PC-9 (cell line): ENCODE measurements at regions of chr6 and their contacts with region 1.

Region 1: DNA sequence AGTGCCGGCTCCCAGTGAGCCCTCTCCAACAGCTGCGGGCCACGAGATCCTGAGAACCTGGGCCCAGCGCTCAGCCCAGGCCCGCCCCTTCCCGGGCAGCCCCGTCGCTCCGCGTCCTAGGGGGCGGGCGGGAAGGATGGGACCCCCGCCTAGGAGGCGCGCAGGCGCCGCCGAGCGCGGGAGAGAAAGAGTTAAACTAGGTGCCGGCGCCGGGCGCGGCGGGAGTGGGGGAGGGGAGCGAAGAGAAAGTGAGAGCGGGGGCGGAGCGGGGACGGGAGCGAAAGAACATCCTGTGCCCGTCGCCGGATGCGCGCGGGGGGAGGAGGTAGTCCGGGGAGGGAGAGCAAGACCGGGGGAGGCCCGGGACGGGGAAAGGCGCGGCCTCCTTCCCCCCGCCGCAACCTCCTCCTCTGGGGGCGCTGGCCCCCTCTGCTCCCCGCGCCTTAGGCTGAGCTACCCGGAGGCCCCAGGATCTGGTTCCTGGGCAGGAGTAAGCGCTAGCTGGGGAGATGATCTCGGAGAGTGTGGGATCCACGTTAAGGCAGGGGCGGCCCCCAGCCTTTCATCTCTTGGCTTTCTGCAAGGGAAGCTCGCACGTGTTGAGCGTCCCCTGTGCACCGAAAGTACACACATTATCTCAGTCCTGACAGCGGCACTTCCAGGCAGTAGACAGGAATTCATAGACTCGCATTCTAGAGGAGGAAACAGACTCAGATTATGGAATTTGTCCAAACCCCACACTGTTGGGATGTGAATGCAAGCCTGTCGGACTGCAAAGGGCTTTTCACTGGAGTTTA is 4.9 kb upstream of the ARMC12 start:
- DNase-seq: peak; percentile 50 to 81
- H3K4me3 ChIP-seq: peak overlapping the region; percentile 81
- H3K27ac ChIP-seq: no peak overlapping the region
- H3K4me1 ChIP-seq: peaks cover 21% of the 10 kb centered on the region
- H3K27me3 ChIP-seq: no peaks in the 10 kb centered on the region
- CTCF ChIP-seq: no peak

Region 2: GRCh38 chr6:35297601-35298481 is 434.1 kb before region 1 on chr6 and contains the start of gene DEF6:
- CTCF ChIA-PET with region 1: no interaction called
- POLR2A ChIA-PET with region 1: interaction called, 4 read pairs
- intact Hi-C with region 1: loop called (anchors 1 kb)
- DNase-seq: peak; percentile 87
- H3K4me3 ChIP-seq: peak within 1 kb of the TSS; percentile 66
- H3K27ac ChIP-seq: no peak within 1 kb of the TSS
- H3K4me1 ChIP-seq: peaks cover 23% of the 10 kb centered on the region
- H3K27me3 ChIP-seq: no peaks in the 10 kb centered on the region
- CTCF ChIP-seq: peak; percentile 85
- total RNA-seq, gene DEF6: 19.6 and 27.0 TPM in 2 replicates

Region 3: DNA sequence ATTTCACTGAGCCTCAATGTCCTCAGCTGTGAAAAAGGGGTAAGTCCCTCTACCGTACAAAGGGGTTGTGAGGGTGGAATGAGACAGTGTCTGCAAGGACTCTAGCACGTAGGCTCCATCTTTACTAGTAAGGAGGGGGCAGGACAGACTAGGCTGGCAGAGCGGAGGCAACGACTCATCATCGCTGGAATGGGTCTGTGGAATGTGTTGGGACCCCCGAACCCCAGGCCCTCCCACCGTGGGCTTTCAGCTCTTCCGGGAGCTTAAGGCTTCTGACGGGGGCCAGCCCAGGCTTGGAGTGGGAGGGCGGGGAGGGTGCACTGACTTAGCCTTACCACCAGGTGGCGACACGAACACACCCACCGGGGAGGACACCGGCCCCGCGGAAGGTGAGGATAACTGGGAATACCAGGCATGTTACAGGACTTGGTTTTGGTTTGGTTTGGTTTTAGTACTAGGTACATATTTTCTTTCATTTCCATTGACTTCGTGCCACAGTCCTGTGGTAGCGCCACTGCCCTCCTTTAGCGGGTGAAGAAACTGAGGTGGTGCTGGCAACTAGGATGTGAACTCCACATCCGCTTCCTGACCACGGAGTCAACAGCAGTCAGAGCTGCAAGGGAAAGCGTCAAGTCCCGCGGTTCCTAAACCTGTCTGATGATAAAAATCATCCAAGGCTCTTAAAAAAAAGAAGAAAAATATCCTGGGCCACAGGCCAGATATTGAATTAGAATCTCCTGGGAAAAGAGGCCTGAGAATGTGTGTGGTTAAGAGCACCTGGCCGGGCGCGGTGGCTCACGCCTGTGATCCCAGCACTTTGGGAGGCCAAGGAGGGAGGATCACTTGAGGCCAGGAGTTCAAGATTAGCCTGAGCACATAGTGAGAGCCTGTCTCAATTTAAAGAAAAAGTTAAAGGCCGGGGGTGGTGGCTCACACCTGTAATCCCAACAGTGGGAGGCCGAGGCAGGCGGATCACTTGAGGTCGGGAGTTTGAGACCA is 209.0 kb before region 1 on chr6:
- CTCF ChIA-PET with region 1: interaction called, 18 read pairs
- POLR2A ChIA-PET with region 1: no interaction called
- intact Hi-C with region 1: loop called (anchors 1 kb)
- DNase-seq: peak; percentile 45 to 69
- H3K4me3 ChIP-seq: no peak overlapping the region
- H3K27ac ChIP-seq: no peak overlapping the region
- H3K4me1 ChIP-seq: 0 out of 2 replicates have a peak, but pooled peaks cover 12% of the 10 kb centered on the region
- H3K27me3 ChIP-seq: no peaks in the 10 kb centered on the region
- CTCF ChIP-seq: peak; percentile 96

Region 4: DNA sequence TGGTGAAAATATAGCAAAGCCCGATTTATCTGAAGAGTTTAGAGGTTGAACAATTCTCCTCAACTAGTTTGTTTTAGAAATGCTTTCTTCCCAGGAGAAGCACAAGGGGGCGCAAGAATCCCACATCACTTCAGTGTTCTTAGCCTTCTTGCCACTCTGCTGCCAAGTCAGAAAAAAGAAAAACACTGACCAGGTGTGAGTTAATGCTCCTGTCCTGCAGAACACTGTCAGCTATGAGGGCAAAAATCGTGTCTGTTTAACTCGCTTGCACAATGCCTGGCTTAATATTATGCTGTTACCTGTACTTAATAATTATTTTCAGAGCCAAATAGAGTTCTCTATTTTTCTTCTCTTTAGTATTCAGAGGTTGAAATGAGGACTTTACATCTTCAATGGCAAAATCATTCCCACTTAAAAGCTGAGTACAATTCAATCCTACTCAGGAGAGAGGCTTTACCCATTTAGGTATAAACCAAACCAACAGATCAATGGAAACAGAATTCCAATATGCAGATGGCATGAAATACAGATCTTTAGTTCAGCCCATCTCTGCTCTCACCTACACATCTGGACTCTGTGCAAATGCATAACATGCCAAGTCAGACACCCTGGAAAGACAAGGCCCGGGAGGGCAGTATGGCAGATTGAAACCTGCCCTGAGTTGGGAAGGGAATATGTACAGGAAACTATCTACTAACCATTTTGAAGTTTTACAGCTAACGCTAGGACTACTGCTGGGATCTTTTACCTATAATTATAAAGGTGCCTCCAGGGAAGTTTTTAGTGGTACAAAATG is 147.8 kb before region 1 on chr6:
- CTCF ChIA-PET with region 1: interaction called, 8 read pairs
- POLR2A ChIA-PET with region 1: no interaction called
- intact Hi-C with region 1: loop called (anchors 1 kb)
- DNase-seq: peak; percentile 63 to 66
- H3K4me3 ChIP-seq: no peak overlapping the region
- H3K27ac ChIP-seq: no peak overlapping the region
- H3K4me1 ChIP-seq: peaks cover 4% of the 10 kb centered on the region
- H3K27me3 ChIP-seq: no peaks in the 10 kb centered on the region
- CTCF ChIP-seq: peak; percentile 91

Region 5: GRCh38 chr6:35594503-35595186 is 137.3 kb before region 1 on chr6:
- CTCF ChIA-PET with region 1: no interaction called
- POLR2A ChIA-PET with region 1: no interaction called
- intact Hi-C with region 1: no loop called
- DNase-seq: no peak
- H3K4me3 ChIP-seq: no peak overlapping the region
- H3K27ac ChIP-seq: no peak overlapping the region
- H3K4me1 ChIP-seq: peaks cover 46% of the 10 kb centered on the region
- H3K27me3 ChIP-seq: no peaks in the 10 kb centered on the region
- CTCF ChIP-seq: no peak

Region 6: GRCh38 chr6:35669451-35670045 is 62.4 kb before region 1 on chr6:
- CTCF ChIA-PET with region 1: no interaction called
- POLR2A ChIA-PET with region 1: no interaction called
- intact Hi-C with region 1: no loop called
- DNase-seq: no peak
- H3K4me3 ChIP-seq: no peak overlapping the region
- H3K27ac ChIP-seq: no peak overlapping the region
- H3K4me1 ChIP-seq: no peaks in the 10 kb centered on the region
- H3K27me3 ChIP-seq: no peaks in the 10 kb centered on the region
- CTCF ChIP-seq: no peak

Region 7: DNA sequence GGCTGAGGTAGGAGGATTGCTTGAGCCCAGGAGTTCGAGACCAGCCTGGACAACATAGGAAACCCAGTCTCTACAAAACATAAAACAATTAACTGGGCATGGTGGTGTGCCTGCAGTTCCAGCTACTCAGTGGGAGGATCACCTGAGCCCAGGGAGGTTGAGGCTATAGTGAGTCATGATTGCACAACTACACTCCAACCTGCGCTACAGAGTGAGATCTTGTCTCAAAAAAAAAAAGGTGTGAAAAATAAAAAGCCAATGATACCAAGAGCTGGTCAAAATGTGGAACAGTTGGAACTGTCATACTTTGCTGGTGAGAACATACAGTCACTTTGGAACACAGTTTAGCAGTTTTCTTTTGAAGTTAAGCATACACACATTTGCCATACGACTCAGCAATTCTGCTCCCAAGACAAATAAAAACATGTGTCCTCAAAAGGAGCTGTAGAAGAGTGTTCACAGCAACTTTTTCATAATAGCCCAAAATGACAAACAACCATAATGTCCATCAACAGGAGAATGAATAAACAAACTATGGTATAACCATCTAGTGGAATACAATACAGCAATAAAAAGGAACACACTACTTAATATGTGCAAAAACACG is 21.6 kb before region 1 on chr6:
- CTCF ChIA-PET with region 1: no interaction called
- POLR2A ChIA-PET with region 1: no interaction called
- intact Hi-C with region 1: no loop called
- DNase-seq: peak in 1 of 2 experiments; percentile 63
- H3K4me3 ChIP-seq: no peak overlapping the region
- H3K27ac ChIP-seq: no peak overlapping the region
- H3K4me1 ChIP-seq: no peaks in the 10 kb centered on the region
- H3K27me3 ChIP-seq: no peaks in the 10 kb centered on the region
- CTCF ChIP-seq: no peak

Region 8: GRCh38 chr6:35765739-35766138 is 33.8 kb after region 1 on chr6:
- CTCF ChIA-PET with region 1: no interaction called
- POLR2A ChIA-PET with region 1: interaction called, 21 read pairs
- intact Hi-C with region 1: no loop called
- DNase-seq: no peak
- H3K4me3 ChIP-seq: no peak overlapping the region
- H3K27ac ChIP-seq: no peak overlapping the region
- H3K4me1 ChIP-seq: no peaks in the 10 kb centered on the region
- H3K27me3 ChIP-seq: peaks cover 8% of the 10 kb centered on the region; the same call in 1 of the 2 replicates
- CTCF ChIP-seq: no peak

Region 9: DNA sequence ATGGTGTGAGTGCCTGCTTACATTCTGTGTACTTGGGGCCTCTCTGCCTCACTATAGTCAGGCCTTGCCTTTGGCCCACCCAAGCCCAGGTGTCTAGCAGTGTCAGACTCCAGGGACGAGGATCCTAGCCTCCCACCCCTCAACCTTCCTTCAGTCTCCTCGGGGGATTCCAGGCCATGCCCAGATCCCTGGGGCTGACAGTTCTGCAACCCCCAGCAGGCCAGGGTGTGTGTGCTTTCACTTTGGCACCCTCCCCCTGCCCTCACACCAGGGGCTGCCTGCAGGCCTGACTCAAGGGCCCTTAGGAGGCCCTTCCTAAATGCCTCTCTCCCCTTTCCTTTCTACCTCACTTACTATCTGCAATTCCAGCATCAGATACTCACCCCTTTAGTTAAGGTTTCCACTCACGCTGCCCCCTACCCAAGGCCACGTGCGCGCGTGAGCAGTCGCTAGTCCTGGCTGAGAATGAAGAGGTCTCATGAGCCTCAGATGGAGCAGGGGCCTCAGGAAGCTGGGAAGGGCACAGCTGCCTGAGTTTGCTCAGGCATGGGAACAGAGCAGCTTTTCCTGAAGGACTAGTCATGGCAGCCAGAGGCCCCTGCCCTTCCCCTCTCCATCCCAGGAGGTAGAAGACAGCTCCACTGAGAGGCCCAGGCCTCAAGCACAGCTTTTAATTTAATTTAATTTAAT is 66.0 kb after region 1 on chr6:
- CTCF ChIA-PET with region 1: no interaction called
- POLR2A ChIA-PET with region 1: no interaction called
- intact Hi-C with region 1: no loop called
- DNase-seq: no peak
- H3K4me3 ChIP-seq: no peak overlapping the region
- H3K27ac ChIP-seq: no peak overlapping the region
- H3K4me1 ChIP-seq: no peaks in the 10 kb centered on the region
- H3K27me3 ChIP-seq: no peaks in the 10 kb centered on the region
- CTCF ChIP-seq: no peak